ENCODE measurements at regions of chr17 and their contacts with region 1.

Region 1: GRCh38 chr17:27915709-27916108 is 22.5 kb upstream of the LYRM9 start:
- DNase-seq: no peak
- H3K4me3 ChIP-seq: no peak overlapping the region
- H3K27ac ChIP-seq: no peak overlapping the region
- H3K4me1 ChIP-seq: no peaks in the 10 kb centered on the region
- H3K27me3 ChIP-seq: no peaks in the 10 kb centered on the region
- CTCF ChIP-seq: no peak
- POLR2A ChIP-seq: no peak

Region 2: GRCh38 chr17:27494192-27495091 is 421.3 kb before region 1 on chr17:
- intact Hi-C with region 1: no loop called
- DNase-seq: peak; percentile 87 to 91
- H3K4me3 ChIP-seq: no peak overlapping the region
- H3K27ac ChIP-seq: peak overlapping the region; percentile 98 to 100 (median 99)
- H3K4me1 ChIP-seq: peaks cover 63 to 83% of the 10 kb centered on the region in 2 donors
- H3K27me3 ChIP-seq: no peaks in the 10 kb centered on the region
- CTCF ChIP-seq: peak in 5 of 6 experiments; percentile 14 to 80 (median 68)
- POLR2A ChIP-seq: peak in 1 of 2 donors; percentile 70

Region 3: DNA sequence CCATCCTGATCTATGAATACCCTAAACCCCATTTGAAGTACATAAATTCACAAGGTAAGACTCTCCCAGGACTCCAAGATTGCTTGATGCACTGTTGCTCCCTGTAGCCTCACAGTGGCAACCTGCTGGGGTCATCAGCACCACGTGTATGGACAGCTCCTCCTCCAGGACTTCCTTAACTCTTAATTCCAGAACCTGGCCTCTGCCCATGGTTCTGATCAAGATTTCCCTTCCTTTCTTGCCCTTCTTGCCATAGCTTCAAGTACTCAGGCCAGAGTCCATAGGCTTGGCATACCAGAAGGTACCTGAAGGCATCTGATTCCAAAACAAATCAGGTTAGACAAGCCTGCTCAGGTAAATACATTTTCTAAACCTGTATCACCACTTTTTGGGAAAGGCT is 92.8 kb after region 1 on chr17:
- intact Hi-C with region 1: loop called (anchors 10 kb)
- DNase-seq: peak; percentile 60 to 73
- H3K4me3 ChIP-seq: no peak overlapping the region
- H3K27ac ChIP-seq: no peak overlapping the region
- H3K4me1 ChIP-seq: no peaks in the 10 kb centered on the region
- H3K27me3 ChIP-seq: no peaks in the 10 kb centered on the region
- CTCF ChIP-seq: peak in 1 of 6 experiments; percentile 4
- POLR2A ChIP-seq: no peak